Spleen (tissue), 13 donors: ENCODE measurements at regions of chr14 and their contacts with region 1.

Region 1: DNA sequence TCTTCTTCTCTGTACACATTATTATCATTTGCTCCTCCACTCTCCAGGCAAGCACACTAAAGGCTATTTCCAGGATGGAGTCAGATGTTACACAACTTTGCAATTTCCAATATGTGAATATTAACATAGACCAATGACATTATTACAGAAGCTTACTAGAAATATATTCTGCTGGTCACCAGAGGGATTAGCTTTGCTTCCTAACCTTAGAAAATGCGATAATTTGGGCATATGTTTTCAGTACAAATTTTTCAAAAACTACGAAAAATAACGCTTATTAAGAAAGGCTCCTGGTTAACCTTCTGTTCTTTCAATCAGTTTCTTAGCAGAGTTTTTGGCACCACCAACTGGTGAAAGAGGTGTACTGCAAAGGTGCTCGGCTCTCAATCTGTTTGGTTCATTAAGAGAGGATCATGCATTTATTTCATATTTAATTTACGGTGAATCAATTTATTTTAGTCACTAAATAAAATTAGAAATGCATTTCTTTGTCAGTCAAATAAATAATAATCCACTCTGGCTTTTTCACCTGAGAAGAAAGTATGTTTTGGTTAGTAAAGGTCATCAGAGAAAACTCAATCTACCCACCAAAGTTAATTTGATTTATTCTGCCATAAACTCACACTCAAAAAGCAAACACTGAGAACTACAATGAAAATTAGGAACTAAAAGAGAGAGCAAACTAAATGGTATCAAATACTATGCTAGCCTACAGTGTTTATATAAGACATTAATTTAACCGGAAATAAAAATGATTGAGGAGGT is 39.2 kb downstream of the EFCAB11 start:
- DNase-seq: no peak
- H3K4me3 ChIP-seq: no peak overlapping the region
- H3K27ac ChIP-seq: no peak overlapping the region
- H3K4me1 ChIP-seq: peaks cover 0 to 25% (median 5%) of the 10 kb centered on the region in 6 donors
- H3K27me3 ChIP-seq: no peaks in the 10 kb centered on the region
- CTCF ChIP-seq: peak; percentile 78 to 93 (median 89)
- POLR2A ChIP-seq: no peak

Region 2: GRCh38 chr14:89036371-89036770 is 878.9 kb before region 1 on chr14:
- intact Hi-C with region 1: loop called (anchors 5 kb)
- DNase-seq: no peak
- H3K4me3 ChIP-seq: no peak overlapping the region
- H3K27ac ChIP-seq: no peak overlapping the region
- H3K4me1 ChIP-seq: peaks cover 0 to 14% (median 14%) of the 10 kb centered on the region in 6 donors
- H3K27me3 ChIP-seq: peaks cover 0 to 33% (median 0%) of the 10 kb centered on the region in 7 donors
- CTCF ChIP-seq: no peak
- POLR2A ChIP-seq: no peak

Region 3: DNA sequence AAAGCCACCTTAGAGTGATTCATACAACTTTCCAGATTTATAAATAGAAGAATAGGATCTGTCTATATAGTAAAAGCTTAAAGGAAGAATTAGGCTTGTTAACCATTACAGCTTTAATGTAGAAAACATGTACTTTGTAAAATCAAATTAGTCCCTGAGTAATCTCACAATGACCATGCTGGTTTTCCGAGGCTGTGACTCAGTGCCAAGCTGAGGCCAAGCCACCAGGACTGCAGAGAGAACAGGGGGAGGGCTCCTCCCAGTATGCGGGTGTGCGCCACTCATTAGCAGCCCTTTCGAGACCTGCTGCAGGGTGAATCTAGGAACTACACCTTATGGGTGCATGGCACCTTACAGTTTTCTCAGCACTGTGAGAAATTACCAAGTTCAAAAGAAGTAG is 127.8 kb before region 1 on chr14:
- intact Hi-C with region 1: no loop called
- DNase-seq: no peak
- H3K4me3 ChIP-seq: no peak overlapping the region
- H3K27ac ChIP-seq: no peak overlapping the region
- H3K4me1 ChIP-seq: no peaks in the 10 kb centered on the region
- H3K27me3 ChIP-seq: no peaks in the 10 kb centered on the region
- CTCF ChIP-seq: no peak
- POLR2A ChIP-seq: no peak

Region 4: DNA sequence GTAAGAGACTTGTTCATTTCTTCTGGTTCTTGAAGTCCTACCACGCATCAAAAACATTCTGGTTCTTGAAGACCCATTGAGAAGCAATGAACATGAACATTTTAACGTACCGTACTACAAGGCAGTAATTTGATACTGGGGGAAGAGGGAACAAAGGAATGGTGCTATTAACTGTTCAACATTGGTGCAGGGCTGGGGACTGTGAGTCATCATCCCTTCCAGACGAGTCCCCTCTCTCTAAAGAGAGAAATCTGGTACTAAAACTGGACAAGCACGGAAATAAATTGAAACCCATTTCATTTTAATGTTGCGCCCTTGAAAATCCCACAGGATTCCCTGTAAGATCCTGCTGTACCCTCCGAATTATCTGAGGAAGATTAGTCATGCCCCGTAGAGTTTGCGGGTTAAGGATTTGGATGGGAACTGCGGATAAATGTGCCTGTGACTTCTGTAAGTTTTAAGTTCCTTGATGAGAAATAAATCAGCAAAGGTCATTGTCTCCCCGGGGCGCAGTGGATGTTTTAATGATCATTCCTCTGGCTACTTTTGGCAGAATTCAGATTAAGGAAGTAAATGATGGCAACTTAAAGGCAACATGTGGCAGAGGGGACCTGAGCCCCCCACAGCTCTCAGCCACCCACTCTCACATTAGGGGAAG is 225.1 kb after region 1 on chr14:
- intact Hi-C with region 1: no loop called
- DNase-seq: no peak
- H3K4me3 ChIP-seq: no peak overlapping the region
- H3K27ac ChIP-seq: no peak overlapping the region
- H3K4me1 ChIP-seq: no peaks in the 10 kb centered on the region
- H3K27me3 ChIP-seq: peaks cover 0 to 5% (median 0%) of the 10 kb centered on the region in 7 donors
- CTCF ChIP-seq: no peak
- POLR2A ChIP-seq: no peak